ENCODE measurements at regions of chr1 and their contacts with region 1.

Region 1: DNA sequence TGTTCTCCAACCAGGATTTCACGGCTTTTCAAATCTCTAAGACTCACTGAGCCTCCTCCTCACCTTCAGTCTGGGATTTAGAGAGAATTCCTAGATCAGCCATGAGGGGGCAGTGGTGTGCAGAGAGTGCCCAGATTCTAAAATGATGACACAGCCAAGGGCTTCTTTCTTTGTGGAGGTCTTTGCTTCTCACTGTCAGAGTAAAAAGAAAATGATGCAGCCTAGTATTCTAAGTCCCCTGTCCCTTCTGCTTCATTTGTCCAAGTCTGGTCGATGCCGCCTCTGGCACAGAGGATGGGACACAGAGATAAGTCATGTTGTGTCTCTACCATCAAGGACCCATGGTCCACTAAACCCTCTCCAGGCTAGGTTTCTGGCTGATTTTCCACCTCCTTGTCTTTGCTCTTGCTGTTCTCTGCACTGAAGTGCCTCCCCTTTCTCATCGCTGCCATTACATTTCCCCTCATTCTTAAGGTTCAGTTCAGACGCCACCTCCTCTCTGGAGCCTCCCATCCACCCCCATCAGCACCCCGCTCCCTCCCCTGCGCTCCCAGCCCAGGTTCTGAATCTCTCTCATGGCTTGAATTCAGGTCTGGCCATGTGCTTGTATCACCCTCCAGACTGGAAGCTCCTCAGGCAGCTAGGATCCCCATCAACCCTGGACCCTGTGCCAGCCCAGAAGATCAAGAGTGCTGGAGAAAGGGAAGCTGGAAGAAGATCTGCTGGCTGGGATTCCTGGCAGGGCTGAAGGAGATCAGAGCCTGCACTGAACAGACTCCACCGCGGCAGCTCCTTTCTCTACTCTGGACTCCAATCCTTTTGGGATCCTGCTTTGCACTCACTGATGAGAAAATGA is 12.0 kb upstream of the TINAGL1 start:
- DNase-seq: peak; percentile 47
- ATAC-seq: peak; percentile 94
- H3K4me3 ChIP-seq: no peak overlapping the region
- H3K27ac ChIP-seq: no peak overlapping the region
- H3K4me1 ChIP-seq: peaks cover 2% of the 10 kb centered on the region; the same call in 1 of the 2 replicates
- H3K27me3 ChIP-seq: peaks cover 5% of the 10 kb centered on the region; the same call in 1 of the 2 replicates
- CTCF ChIP-seq: peak; percentile 94
- POLR2A ChIP-seq: 0 out of 2 replicates have a peak, but pooled peaks have one; percentile 32
- RAD21 ChIP-seq: peak; percentile 93

Region 2: DNA sequence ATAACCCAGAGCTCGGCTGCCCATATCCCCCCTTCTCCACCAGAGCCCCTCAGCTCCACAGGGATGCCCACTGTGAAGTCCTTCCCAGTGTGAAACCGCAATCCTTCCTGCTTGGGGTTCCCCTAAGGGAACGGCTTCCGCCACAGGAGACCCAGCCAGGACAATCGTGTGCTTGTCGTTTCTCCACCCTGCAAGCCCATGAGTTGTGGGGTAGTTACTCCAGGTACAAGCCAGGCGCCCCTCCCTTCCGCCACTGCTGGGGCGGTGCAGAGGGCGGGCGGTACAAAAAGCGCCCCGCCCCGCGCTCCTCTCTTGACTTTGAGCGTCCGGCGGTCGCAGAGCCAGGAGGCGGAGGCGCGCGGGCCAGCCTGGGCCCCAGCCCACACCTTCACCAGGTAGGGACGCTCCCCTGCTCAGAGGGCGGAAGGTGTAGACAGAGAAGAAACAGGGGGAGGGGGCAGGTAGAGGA is 11.9 kb after region 1 on chr1 and contains the start of gene TINAGL1:
- CTCF ChIA-PET with region 1: no interaction called
- POLR2A ChIA-PET with region 1: no interaction called
- dilution Hi-C with region 1: no loop called
- in situ Hi-C with region 1: no loop called
- intact Hi-C with region 1: no loop called
- DNase-seq: no peak
- ATAC-seq: no peak
- H3K4me3 ChIP-seq: no peak within 1 kb of the TSS
- H3K27ac ChIP-seq: no peak within 1 kb of the TSS
- H3K4me1 ChIP-seq: peaks cover 29% of the 10 kb centered on the region
- H3K27me3 ChIP-seq: no peaks in the 10 kb centered on the region
- CTCF ChIP-seq: no peak
- POLR2A ChIP-seq: no peak
- RAD21 ChIP-seq: no peak
- total RNA-seq, gene TINAGL1: 0.54 and 0.56 TPM in 2 replicates

Region 3: DNA sequence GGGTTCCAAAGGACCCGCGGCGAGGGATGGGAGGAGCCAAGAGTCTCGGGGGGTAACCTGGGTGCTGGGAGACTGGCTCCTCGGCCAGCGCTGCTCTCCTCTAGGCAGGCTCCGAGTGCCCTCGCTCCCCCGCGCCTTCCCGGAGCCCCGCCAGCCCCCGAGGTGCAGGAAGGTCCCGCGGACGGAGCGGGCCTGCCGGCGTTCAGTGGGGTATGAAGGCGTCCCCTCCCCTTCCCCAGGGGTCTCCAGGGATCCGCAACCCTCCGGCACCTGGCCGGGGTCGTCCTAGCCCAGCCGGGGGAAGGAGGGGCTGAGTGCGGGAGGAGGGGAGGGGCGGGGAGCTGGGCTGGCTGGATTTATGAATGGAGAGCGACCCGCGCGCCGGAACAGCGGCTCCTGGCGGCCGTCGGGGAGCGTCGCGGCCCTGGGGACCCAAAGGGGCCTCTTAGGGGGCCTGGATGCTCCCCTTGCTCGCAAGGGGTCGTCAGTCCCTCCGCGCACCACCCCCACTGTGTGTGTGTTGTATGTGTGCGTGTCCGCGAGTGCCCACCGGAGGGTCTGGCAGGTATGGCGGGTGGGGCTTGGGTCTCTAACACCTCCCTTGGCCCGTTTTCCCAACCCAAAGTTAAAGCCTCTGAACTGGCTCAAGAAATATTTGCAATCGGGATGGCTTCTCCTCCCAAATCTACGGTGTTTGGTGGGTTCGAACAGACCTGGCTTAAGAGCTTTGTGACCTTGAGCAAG is 53.7 kb after region 1 on chr1:
- CTCF ChIA-PET with region 1: interaction called, 10 read pairs
- POLR2A ChIA-PET with region 1: no interaction called
- dilution Hi-C with region 1: no loop called
- in situ Hi-C with region 1: loop called (anchors 10 kb)
- intact Hi-C with region 1: loop called (anchors 1 kb)
- DNase-seq: peak; percentile 12
- ATAC-seq: peak; percentile 91
- H3K4me3 ChIP-seq: peak overlapping the region; percentile 54
- H3K27ac ChIP-seq: no peak overlapping the region
- H3K4me1 ChIP-seq: no peaks in the 10 kb centered on the region; the same call in 1 of the 2 replicates
- H3K27me3 ChIP-seq: peaks cover 38% of the 10 kb centered on the region
- CTCF ChIP-seq: peak; percentile 70
- POLR2A ChIP-seq: no peak
- RAD21 ChIP-seq: peak; percentile 42

Region 4: DNA sequence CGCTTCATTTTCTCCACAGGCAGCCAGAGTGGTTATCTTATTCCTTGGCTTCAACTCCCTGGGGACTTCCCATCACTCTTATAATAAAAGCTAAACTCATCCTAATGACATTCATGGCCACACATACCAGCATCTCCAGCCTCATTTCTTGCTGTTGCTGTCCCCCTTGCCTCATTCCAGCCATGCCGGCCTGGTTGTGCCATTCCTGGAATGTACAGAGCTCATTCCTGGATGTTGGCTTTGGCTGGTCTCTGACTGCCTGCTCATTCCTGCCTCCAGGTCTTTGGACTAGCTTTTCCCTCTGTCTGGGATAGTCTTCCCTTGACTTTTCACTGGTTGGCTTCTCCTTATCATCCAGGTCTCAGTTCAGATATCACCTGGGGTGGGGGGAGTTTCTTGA is 82.7 kb after region 1 on chr1:
- CTCF ChIA-PET with region 1: no interaction called
- POLR2A ChIA-PET with region 1: no interaction called
- dilution Hi-C with region 1: no loop called
- in situ Hi-C with region 1: no loop called
- intact Hi-C with region 1: no loop called
- DNase-seq: peak; percentile 62
- ATAC-seq: peak; percentile 12
- H3K4me3 ChIP-seq: no peak overlapping the region
- H3K27ac ChIP-seq: no peak overlapping the region
- H3K4me1 ChIP-seq: peaks cover 5% of the 10 kb centered on the region; the same call in 1 of the 2 replicates
- H3K27me3 ChIP-seq: no peaks in the 10 kb centered on the region
- CTCF ChIP-seq: 0 out of 2 replicates have a peak, but pooled peaks have one; percentile 9
- POLR2A ChIP-seq: no peak
- RAD21 ChIP-seq: no peak

Region 5: DNA sequence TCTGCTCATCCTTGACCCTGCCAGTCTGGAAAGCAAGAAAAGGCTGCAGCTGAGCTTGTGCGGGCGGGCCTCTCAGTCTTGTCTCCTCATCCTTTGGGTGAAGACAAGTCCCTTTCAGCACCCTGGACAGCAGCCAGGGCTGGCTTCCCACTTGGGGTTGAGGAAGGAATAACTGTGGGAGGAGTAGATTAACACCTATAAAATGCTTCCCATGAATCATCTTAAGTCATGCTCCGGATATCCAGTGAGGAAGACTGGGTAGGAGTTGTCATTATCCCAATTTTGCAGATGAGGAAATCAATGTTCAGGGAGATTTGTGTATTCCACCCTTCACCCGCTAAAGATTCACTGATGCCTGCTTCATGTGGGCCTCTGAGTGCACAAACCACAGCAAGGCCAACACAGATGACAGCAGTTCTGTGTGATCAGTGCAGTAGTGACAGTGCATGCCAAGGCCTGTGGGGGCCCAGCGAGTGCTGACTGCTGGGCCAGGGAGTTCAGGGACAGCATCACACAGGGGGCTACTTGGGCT is 159.5 kb after region 1 on chr1:
- CTCF ChIA-PET with region 1: no interaction called
- POLR2A ChIA-PET with region 1: no interaction called
- dilution Hi-C with region 1: no loop called
- in situ Hi-C with region 1: loop called (anchors 10 kb)
- intact Hi-C with region 1: no loop called
- DNase-seq: peak; percentile 75
- ATAC-seq: peak; percentile 84
- H3K4me3 ChIP-seq: no peak overlapping the region
- H3K27ac ChIP-seq: no peak overlapping the region
- H3K4me1 ChIP-seq: no peaks in the 10 kb centered on the region
- H3K27me3 ChIP-seq: peaks cover 7% of the 10 kb centered on the region; the same call in 1 of the 2 replicates
- CTCF ChIP-seq: no peak
- POLR2A ChIP-seq: no peak
- RAD21 ChIP-seq: no peak

Region 6: GRCh38 chr1:31789259-31790065 is 225.1 kb after region 1 on chr1:
- CTCF ChIA-PET with region 1: no interaction called
- POLR2A ChIA-PET with region 1: no interaction called
- dilution Hi-C with region 1: no loop called
- in situ Hi-C with region 1: no loop called
- intact Hi-C with region 1: loop called (anchors 2 kb)
- DNase-seq: peak; percentile 82
- ATAC-seq: peak; percentile 83
- H3K4me3 ChIP-seq: peak overlapping the region; percentile 60
- H3K27ac ChIP-seq: peak overlapping the region; percentile 31
- H3K4me1 ChIP-seq: peaks cover 4% of the 10 kb centered on the region
- H3K27me3 ChIP-seq: no peaks in the 10 kb centered on the region
- CTCF ChIP-seq: peak; percentile 97
- POLR2A ChIP-seq: no peak
- RAD21 ChIP-seq: peak; percentile 96